Mammary epithelial cell (primary cell): ENCODE measurements at regions of chr1 and their contacts with region 1.

Region 1: GRCh38 chr1:225567590-225568194 is 85.2 kb downstream of the ENAH start:
- DNase-seq: no peak
- H3K4me3 ChIP-seq: no peak overlapping the region
- H3K27ac ChIP-seq: no peak overlapping the region
- H3K4me1 ChIP-seq: no peaks in the 10 kb centered on the region
- H3K27me3 ChIP-seq: no peaks in the 10 kb centered on the region
- CTCF ChIP-seq: peak in 1 of 2 donors; percentile 14

Region 2: GRCh38 chr1:225627304-225627947 is 59.7 kb after region 1 on chr1:
- CTCF ChIA-PET with region 1: no interaction called
- dilution Hi-C with region 1: loop called (anchors 10 kb)
- in situ Hi-C with region 1: no loop called
- intact Hi-C with region 1: no loop called
- DNase-seq: no peak
- H3K4me3 ChIP-seq: no peak overlapping the region
- H3K27ac ChIP-seq: no peak overlapping the region
- H3K4me1 ChIP-seq: peaks cover 6% of the 10 kb centered on the region
- H3K27me3 ChIP-seq: no peaks in the 10 kb centered on the region
- CTCF ChIP-seq: no peak

Region 3: GRCh38 chr1:225642177-225642576 is 74.5 kb after region 1 on chr1:
- CTCF ChIA-PET with region 1: no interaction called
- dilution Hi-C with region 1: no loop called
- in situ Hi-C with region 1: no loop called
- intact Hi-C with region 1: no loop called
- DNase-seq: no peak
- H3K4me3 ChIP-seq: no peak overlapping the region
- H3K27ac ChIP-seq: no peak overlapping the region
- H3K4me1 ChIP-seq: no peaks in the 10 kb centered on the region
- H3K27me3 ChIP-seq: no peaks in the 10 kb centered on the region
- CTCF ChIP-seq: no peak